ENCODE measurements at regions of chr10 and their contacts with region 1.

Region 1: DNA sequence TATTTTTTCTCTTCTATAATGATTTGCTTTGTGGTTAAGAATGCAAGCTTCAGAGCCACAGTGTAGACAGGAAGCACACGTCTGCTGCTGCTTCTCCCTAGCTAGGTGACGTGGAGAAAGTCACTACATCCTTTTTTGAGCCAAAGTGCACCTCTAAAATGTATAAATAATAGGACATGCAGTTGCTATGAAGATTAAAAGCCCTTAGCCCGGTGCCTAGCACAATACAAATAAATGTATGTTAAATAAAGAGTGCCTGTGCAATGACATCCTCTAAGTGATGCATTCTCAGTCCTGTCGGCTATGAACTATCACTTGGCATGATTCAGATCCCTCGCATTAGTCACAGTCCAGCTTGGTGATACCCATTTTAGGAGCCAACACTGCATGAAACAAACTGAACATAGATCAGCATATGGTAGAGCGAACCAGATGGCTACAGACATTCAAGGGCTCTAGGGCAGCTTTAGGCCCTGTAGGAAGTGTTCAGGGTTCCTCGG is 4.8 kb upstream of the TRDMT1 start:
- DNase-seq: peak; percentile 8
- H3K4me3 Mint-ChIP-seq: peak overlapping the region; percentile 6
- H3K27ac Mint-ChIP-seq: peak overlapping the region; percentile 56
- H3K4me1 Mint-ChIP-seq: peaks cover 27% of the 10 kb centered on the region
- H3K27me3 Mint-ChIP-seq: no peaks in the 10 kb centered on the region

Region 2: GRCh38 chr10:17216217-17216900 is 10.1 kb after region 1 on chr10:
- intact Hi-C with region 1: loop called (anchors 1 kb)
- DNase-seq: peak; percentile 34
- H3K4me3 Mint-ChIP-seq: peak overlapping the region; percentile 45
- H3K27ac Mint-ChIP-seq: peak overlapping the region; percentile 98
- H3K4me1 Mint-ChIP-seq: peaks cover 51% of the 10 kb centered on the region
- H3K27me3 Mint-ChIP-seq: no peaks in the 10 kb centered on the region

Region 3: DNA sequence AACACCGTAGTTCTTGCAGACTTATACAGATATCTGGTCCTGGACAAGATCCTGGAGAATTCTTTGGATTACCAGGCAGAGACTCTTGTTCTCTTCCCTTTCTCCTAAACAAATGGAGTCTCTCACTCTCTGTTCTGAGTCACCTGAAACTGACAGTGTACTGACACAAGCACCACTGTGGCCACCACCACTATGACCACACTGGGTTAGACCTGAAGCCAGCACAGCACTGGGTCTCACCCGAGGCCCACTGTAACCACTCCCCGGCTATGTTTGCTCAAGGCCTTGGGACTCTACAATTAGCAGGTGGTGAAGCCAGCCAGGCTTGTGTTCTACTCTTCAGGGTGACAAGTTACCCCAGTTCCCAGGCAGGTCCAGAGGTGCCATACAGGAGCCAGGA is 768.2 kb after region 1 on chr10:
- intact Hi-C with region 1: no loop called
- DNase-seq: no peak
- H3K4me3 Mint-ChIP-seq: no peak overlapping the region
- H3K27ac Mint-ChIP-seq: no peak overlapping the region
- H3K4me1 Mint-ChIP-seq: no peaks in the 10 kb centered on the region
- H3K27me3 Mint-ChIP-seq: no peaks in the 10 kb centered on the region